B cell (primary cell): ENCODE measurements at regions of chr1 and their contacts with region 1.

Region 1: DNA sequence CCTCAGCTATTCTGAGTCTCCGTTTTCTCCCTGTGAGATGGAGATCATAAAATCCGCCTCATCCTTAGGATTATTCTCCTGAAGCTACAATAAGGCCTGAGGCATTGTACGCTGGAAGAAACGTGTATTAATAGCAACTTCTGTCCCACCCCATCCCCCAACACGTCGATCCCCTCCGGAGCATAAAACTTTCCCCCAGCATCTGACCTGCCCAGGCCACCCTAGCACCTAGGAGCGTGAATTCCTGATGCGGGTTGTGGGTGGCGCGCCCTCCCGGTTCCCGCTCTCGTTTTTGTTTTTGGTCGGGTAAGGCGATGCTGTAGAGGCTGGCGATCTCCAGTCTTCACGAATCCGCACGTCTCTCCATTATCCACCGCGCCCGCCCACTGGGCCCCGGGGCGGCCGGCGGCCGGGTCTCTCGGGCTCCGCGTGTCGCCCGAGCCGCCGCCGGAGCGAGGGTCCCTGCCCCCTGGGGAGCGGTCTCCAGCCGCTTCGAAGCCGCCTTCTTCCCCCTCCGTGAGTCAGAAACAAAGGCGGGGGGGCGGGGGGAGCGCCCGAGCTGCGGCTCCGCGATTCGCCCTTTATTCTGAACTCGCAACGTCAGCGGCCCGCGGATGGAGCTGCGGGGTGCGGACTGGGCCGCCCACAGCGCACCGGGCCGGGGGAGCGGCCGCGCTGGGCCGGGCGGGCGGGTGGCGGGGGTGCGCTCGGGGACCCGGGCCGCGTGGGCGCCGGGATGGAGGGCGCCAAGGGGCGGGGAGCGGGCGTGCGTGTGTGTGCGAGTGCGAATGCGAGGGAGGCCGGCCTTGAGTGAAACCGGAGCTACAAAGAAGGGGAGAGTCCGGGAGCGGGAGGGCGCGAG is at the start of gene PLEKHO1:
- DNase-seq: peak; percentile 92
- ATAC-seq: peak; percentile 78
- H3K4me3 ChIP-seq: peak within 1 kb of the TSS; percentile 73 to 96 (median 94)
- H3K4me3 Mint-ChIP-seq: peak within 1 kb of the TSS; percentile 98
- H3K27ac ChIP-seq: peak within 1 kb of the TSS; percentile 80 to 95
- H3K27ac Mint-ChIP-seq: peak within 1 kb of the TSS; percentile 99
- H3K4me1 ChIP-seq: peaks cover 52 to 56% of the 10 kb centered on the region in 2 donors
- H3K4me1 Mint-ChIP-seq: peaks cover 68% of the 10 kb centered on the region
- H3K27me3 ChIP-seq: no peaks in the 10 kb centered on the region
- H3K27me3 Mint-ChIP-seq: no peaks in the 10 kb centered on the region
- CTCF ChIP-seq: no peak
- total RNA-seq, gene PLEKHO1: 182 and 186 TPM in 2 replicates

Region 2: GRCh38 chr1:150021191-150021694 is 128.3 kb before region 1 on chr1:
- CTCF ChIA-PET with region 1: no interaction called
- POLR2A ChIA-PET with region 1: no interaction called
- intact Hi-C with region 1: no loop called
- DNase-seq: no peak
- ATAC-seq: no peak
- H3K4me3 ChIP-seq: no peak overlapping the region
- H3K4me3 Mint-ChIP-seq: no peak overlapping the region
- H3K27ac ChIP-seq: no peak overlapping the region
- H3K27ac Mint-ChIP-seq: no peak overlapping the region
- H3K4me1 ChIP-seq: peaks cover 7 to 8% of the 10 kb centered on the region in 2 donors
- H3K4me1 Mint-ChIP-seq: peaks cover 12% of the 10 kb centered on the region
- H3K27me3 ChIP-seq: peaks cover 0 to 5% (median 3%) of the 10 kb centered on the region in 4 experiments
- H3K27me3 Mint-ChIP-seq: peaks cover 17% of the 10 kb centered on the region
- CTCF ChIP-seq: no peak

Region 3: GRCh38 chr1:150109586-150109985 is 39.9 kb before region 1 on chr1:
- CTCF ChIA-PET with region 1: interaction called, 3 read pairs
- POLR2A ChIA-PET with region 1: interaction called, 10 read pairs
- intact Hi-C with region 1: loop called (anchors 5 kb)
- DNase-seq: peak; percentile 51
- ATAC-seq: peak; percentile 51
- H3K4me3 ChIP-seq: peak overlapping the region in 3 of 5 experiments; percentile 27 to 53 (median 27)
- H3K4me3 Mint-ChIP-seq: peak overlapping the region; percentile 83
- H3K27ac ChIP-seq: peak overlapping the region; percentile 26 to 80
- H3K27ac Mint-ChIP-seq: peak overlapping the region; percentile 72
- H3K4me1 ChIP-seq: peaks cover 14 to 19% of the 10 kb centered on the region in 2 donors
- H3K4me1 Mint-ChIP-seq: peaks cover 26% of the 10 kb centered on the region
- H3K27me3 ChIP-seq: no peaks in the 10 kb centered on the region
- H3K27me3 Mint-ChIP-seq: no peaks in the 10 kb centered on the region
- CTCF ChIP-seq: no peak

Region 4: GRCh38 chr1:150168960-150169601 is 19.6 kb after region 1 on chr1:
- CTCF ChIA-PET with region 1: interaction called, 24 read pairs
- POLR2A ChIA-PET with region 1: interaction called, 139 read pairs
- intact Hi-C with region 1: no loop called
- DNase-seq: peak; percentile 68
- ATAC-seq: peak; percentile 59
- H3K4me3 ChIP-seq: no peak overlapping the region
- H3K4me3 Mint-ChIP-seq: no peak overlapping the region
- H3K27ac ChIP-seq: no peak overlapping the region
- H3K27ac Mint-ChIP-seq: no peak overlapping the region
- H3K4me1 ChIP-seq: peaks cover 27 to 35% of the 10 kb centered on the region in 2 donors
- H3K4me1 Mint-ChIP-seq: peaks cover 29% of the 10 kb centered on the region
- H3K27me3 ChIP-seq: no peaks in the 10 kb centered on the region
- H3K27me3 Mint-ChIP-seq: no peaks in the 10 kb centered on the region
- CTCF ChIP-seq: peak; percentile 58